Activated naive CD4-positive, alpha-beta T cell treated with anti-CD3 and anti-CD28 coated beads for 36 hours (primary cell): ENCODE measurements at regions of chr5 and their contacts with region 1.

Region 1: GRCh38 chr5:181207214-181208107 is 2.5 kb upstream of the TRIM7 start:
- DNase-seq: peak; percentile 92
- H3K4me3 Mint-ChIP-seq: peak overlapping the region; percentile 92
- H3K27ac Mint-ChIP-seq: peak overlapping the region; percentile 94
- H3K4me1 Mint-ChIP-seq: peaks cover 32% of the 10 kb centered on the region
- H3K27me3 Mint-ChIP-seq: peaks cover 19% of the 10 kb centered on the region

Region 2: GRCh38 chr5:181173420-181174342 is 33.8 kb before region 1 on chr5:
- CTCF ChIA-PET with region 1: interaction called, 3 read pairs
- intact Hi-C with region 1: loop called (anchors 2 kb)
- DNase-seq: peak; percentile 91
- H3K4me3 Mint-ChIP-seq: peak overlapping the region; percentile 89
- H3K27ac Mint-ChIP-seq: peak overlapping the region; percentile 81
- H3K4me1 Mint-ChIP-seq: peaks cover 41% of the 10 kb centered on the region
- H3K27me3 Mint-ChIP-seq: peaks cover 51% of the 10 kb centered on the region

Region 3: DNA sequence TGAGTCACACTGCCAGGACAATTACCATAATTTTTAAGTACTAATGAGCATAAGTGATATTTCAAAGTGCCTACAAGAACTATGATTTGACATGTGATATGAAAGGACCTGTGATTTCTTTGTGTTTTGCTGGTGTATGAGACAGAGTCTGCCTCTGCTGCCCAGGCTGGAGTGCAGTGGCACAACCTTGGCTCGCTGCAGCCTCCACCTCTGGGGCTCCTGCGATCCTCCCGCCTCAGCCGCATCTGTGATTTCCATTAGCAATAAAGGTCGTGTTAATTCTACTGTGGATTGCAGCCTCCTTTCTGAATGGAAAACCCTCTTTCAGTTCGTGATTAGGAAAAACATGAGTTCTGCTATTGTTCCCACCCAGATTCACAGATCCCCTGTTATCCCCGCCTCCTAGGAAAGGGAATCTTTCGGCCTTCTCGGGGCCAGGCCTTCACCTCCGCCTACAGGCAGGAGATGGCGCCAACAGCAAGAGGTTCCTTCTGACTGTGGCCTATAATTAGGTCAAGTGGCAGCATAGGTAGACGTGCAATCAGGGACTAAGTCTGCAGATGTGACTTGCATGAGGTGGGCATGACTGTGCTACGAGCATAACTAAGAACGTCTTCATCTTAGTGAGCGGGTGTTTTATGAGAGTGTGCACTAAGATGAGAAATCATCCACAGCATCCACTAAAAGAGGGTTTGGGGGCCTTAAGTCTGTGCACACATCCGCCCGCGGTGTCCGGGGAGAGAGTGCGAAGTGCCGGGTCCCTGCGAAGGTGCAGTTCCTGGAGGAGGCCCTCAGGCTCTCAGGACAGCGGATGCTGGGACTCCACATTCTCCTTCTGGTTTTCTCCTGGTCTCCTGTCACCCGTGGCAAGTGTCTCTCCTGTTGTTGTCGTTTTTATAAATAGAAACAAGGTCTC is 25.6 kb before region 1 on chr5:
- CTCF ChIA-PET with region 1: interaction called, 13 read pairs
- intact Hi-C with region 1: no loop called
- DNase-seq: peak; percentile 82
- H3K4me3 Mint-ChIP-seq: peak overlapping the region; percentile 20
- H3K27ac Mint-ChIP-seq: no peak overlapping the region
- H3K4me1 Mint-ChIP-seq: peaks cover 19% of the 10 kb centered on the region
- H3K27me3 Mint-ChIP-seq: peaks cover 4% of the 10 kb centered on the region

Region 4: GRCh38 chr5:181217803-181218062 is 10.3 kb after region 1 on chr5:
- CTCF ChIA-PET with region 1: interaction called, 6 read pairs
- intact Hi-C with region 1: loop called (anchors 1 kb)
- DNase-seq: peak; percentile 58
- H3K4me3 Mint-ChIP-seq: peak overlapping the region; percentile 94
- H3K27ac Mint-ChIP-seq: peak overlapping the region; percentile 90
- H3K4me1 Mint-ChIP-seq: peaks cover 38% of the 10 kb centered on the region
- H3K27me3 Mint-ChIP-seq: peaks cover 8% of the 10 kb centered on the region

Region 5: GRCh38 chr5:181243512-181244343 is 36.3 kb after region 1 on chr5 and contains the start of gene RACK1:
- CTCF ChIA-PET with region 1: no interaction called
- intact Hi-C with region 1: loop called (anchors 1 kb)
- DNase-seq: peak; percentile 94
- H3K4me3 Mint-ChIP-seq: peak within 1 kb of the TSS; percentile 95
- H3K27ac Mint-ChIP-seq: peak within 1 kb of the TSS; percentile 99
- H3K4me1 Mint-ChIP-seq: peaks cover 60% of the 10 kb centered on the region
- H3K27me3 Mint-ChIP-seq: no peaks in the 10 kb centered on the region
- total RNA-seq, gene RACK1: 3,176 to 3,362 TPM